CD8-positive, alpha-beta memory T cell (primary cell): ENCODE measurements at regions of chr12 and their contacts with region 1.

Region 1: GRCh38 chr12:27810756-27811155 is 30.7 kb upstream of the MANSC4 start:
- DNase-seq: no peak
- H3K4me3 ChIP-seq: no peak overlapping the region
- H3K4me3 Mint-ChIP-seq: no peak overlapping the region
- H3K27ac ChIP-seq: no peak overlapping the region
- H3K27ac Mint-ChIP-seq: no peak overlapping the region
- H3K4me1 ChIP-seq: peaks cover 24% of the 10 kb centered on the region
- H3K4me1 Mint-ChIP-seq: peaks cover 14 to 25% (median 24%) of the 10 kb centered on the region in 3 donors
- H3K27me3 ChIP-seq: peaks cover 3% of the 10 kb centered on the region
- H3K27me3 Mint-ChIP-seq: peaks cover 4 to 42% of the 10 kb centered on the region in 2 donors

Region 2: GRCh38 chr12:27821259-27821973 is 10.7 kb after region 1 on chr12:
- CTCF ChIA-PET with region 1: interaction called, 11 read pairs
- POLR2A ChIA-PET with region 1: no interaction called
- DNase-seq: peak in 4 of 5 donors; percentile 3 to 42 (median 15)
- H3K4me3 ChIP-seq: peak overlapping the region; percentile 26
- H3K4me3 Mint-ChIP-seq: peak overlapping the region; percentile 32 to 83 (median 79)
- H3K27ac ChIP-seq: no peak overlapping the region
- H3K27ac Mint-ChIP-seq: peak overlapping the region in 7 of 8 donors; percentile 59 to 95 (median 82)
- H3K4me1 ChIP-seq: peaks cover 10% of the 10 kb centered on the region
- H3K4me1 Mint-ChIP-seq: peaks cover 22 to 34% (median 32%) of the 10 kb centered on the region in 3 donors
- H3K27me3 ChIP-seq: no peaks in the 10 kb centered on the region
- H3K27me3 Mint-ChIP-seq: peaks cover under 1 to 6% of the 10 kb centered on the region in 2 donors